ENCODE measurements at regions of chr16 and their contacts with region 1.

Region 1: DNA sequence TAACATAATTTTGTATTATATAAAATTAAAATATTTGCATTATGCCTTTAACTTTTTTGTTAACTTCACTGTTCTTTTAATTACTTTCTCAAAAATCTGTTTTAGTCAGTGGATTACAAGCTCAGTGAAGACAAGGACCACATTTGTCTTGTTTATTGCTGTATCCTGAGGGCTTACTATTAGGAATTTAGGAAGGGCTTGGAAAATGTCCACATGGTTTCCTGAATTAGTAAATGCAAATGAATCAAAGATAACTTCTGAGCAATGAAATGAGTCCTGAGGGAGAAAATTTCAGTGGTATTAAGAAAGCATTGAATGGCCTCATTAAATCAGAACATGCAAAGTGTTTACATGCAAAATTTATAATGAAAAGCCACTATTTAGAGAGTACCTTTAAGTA is 1293.2 kb upstream of the GOT2 start:
- DNase-seq: no peak
- ATAC-seq: no peak
- H3K4me3 ChIP-seq: no peak overlapping the region
- H3K27ac ChIP-seq: no peak overlapping the region
- H3K4me1 ChIP-seq: no peaks in the 10 kb centered on the region
- H3K27me3 ChIP-seq: no peaks in the 10 kb centered on the region
- CTCF ChIP-seq: no peak
- POLR2A ChIP-seq: no peak

Region 2: GRCh38 chr16:60013076-60013475 is 14.3 kb before region 1 on chr16:
- intact Hi-C with region 1: loop called in 1 of 10 experiments (anchors 1 kb)
- DNase-seq: no peak
- ATAC-seq: no peak
- H3K4me3 ChIP-seq: no peak overlapping the region
- H3K27ac ChIP-seq: no peak overlapping the region
- H3K4me1 ChIP-seq: no peaks in the 10 kb centered on the region
- H3K27me3 ChIP-seq: no peaks in the 10 kb centered on the region
- CTCF ChIP-seq: no peak
- POLR2A ChIP-seq: no peak

Measured in heart left ventricle (tissue), 16 donors.